ENCODE measurements at regions of chr5 and their contacts with region 1.

Region 1: GRCh38 chr5:157378502-157378901 is 81.5 kb upstream of the NIPAL4 start:
- DNase-seq: no peak
- H3K4me3 Mint-ChIP-seq: no peak overlapping the region
- H3K27ac Mint-ChIP-seq: no peak overlapping the region
- H3K4me1 Mint-ChIP-seq: peaks cover 13% of the 10 kb centered on the region
- H3K27me3 Mint-ChIP-seq: no peaks in the 10 kb centered on the region

Region 2: GRCh38 chr5:157476702-157477408 is 98.4 kb after region 1 on chr5:
- intact Hi-C with region 1: loop called (anchors 5 kb)
- DNase-seq: no peak
- H3K4me3 Mint-ChIP-seq: no peak overlapping the region
- H3K27ac Mint-ChIP-seq: peak overlapping the region; percentile 48
- H3K4me1 Mint-ChIP-seq: peaks cover 65% of the 10 kb centered on the region
- H3K27me3 Mint-ChIP-seq: no peaks in the 10 kb centered on the region

Region 3: GRCh38 chr5:157603333-157604190 is 225.1 kb after region 1 on chr5:
- intact Hi-C with region 1: no loop called
- DNase-seq: peak; percentile 74
- H3K4me3 Mint-ChIP-seq: peak overlapping the region; percentile 59
- H3K27ac Mint-ChIP-seq: peak overlapping the region; percentile 88
- H3K4me1 Mint-ChIP-seq: peaks cover 79% of the 10 kb centered on the region
- H3K27me3 Mint-ChIP-seq: no peaks in the 10 kb centered on the region